ENCODE measurements at regions of chr15 and their contacts with region 1.

Region 1: DNA sequence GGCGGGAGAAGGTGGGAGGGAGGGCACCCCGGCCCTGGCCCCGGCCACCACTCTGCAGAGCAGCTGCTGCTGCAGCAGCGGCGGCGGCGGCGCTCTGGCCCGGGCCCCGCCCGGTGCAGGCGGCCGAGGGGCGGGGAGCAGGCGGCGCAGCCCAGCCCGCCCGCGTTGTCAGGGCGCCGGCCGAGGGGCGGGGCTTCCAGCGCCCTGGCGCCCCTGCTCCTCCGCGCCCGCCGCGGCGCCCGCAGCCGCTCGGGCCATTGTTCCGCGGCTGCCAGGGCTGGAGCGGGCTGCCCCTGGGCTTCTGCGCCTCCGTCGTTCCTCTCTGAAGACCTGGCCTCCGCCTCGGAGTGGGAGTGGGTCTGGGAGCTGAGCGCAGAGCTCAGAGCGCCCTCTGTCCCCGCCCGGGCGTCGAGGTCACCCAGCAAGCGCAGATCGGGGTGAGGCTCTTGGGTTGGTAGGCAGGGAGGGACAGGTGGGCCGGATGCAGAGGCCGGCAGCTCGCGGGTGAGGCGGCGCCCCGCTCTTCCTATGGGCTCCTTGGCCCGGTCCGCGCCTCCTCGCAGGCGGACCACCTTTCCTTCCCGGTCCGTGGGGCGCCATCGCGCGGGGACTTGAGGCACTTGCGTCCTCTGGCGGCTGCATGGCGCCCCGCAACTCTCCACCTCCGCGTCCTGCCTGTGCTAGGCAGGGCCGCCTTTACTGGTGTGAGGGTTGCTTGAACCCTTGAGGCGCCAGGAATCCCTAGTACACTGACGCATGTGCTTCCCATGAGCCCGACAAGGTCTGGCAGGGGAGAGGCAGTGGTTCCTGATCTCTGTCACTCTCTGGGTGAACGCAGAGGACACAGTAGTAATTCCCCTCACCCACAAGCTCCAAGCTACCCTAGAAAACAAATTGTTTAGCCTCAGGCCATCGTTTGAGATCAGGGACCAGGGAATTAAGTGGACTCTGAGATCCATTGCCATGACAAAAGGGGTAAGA is at the start of gene LPCAT4:
- DNase-seq: peak; percentile 79 to 96 (median 90)

Region 2: GRCh38 chr15:34223904-34224596 is 143.3 kb before region 1 on chr15:
- intact Hi-C with region 1: loop called (anchors 10 kb)
- DNase-seq: no peak

Region 3: GRCh38 chr15:34337557-34338306 is 29.7 kb before region 1 on chr15 and contains the start of gene SLC12A6:
- intact Hi-C with region 1: loop called (anchors 1 kb)
- DNase-seq: peak; percentile 73 to 96 (median 93)

Region 4: DNA sequence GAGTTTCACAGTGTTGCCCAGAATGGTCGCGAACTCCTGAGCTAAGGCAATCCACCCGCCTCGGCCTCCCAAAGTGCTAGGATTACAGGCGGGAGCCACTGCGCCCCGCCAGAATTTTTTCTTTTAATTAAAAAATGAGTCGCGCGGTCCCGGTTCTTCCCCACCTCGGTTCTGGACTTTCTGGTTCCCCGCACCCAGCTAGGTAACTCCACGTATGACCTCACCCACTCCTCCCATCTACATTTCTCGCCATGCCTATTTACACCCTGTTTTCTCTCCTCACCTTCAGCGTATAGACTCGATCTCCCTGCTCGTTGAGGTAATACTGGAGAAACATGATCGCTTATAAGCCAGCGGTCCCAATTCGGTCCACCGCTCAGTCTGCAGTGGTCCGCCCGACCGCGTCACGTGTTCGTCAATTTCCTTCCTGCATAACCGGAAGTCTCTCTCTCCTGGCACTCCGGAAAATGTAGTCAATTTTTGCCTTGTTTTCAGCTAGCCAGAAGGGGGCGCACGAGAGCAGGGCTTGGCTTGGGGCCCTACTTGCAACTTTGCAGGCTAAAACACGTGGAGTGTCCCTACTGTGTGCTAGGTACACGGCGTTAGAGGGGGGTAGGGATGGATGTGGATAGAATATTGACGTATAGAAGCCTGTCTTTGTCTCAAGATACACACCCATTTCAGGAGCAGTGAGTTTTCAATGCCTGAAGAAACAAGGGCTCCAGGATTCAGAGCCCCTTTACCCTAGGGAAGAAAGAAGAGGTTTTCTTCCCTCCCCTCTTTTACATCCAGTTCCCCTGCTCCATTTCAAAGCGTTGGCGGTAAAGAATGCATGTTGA is 24.4 kb before region 1 on chr15 and contains the starts of genes NOP10 and NUTM1:
- intact Hi-C with region 1: loop called (anchors 1 kb)
- DNase-seq: peak; percentile 86 to 98 (median 94)

Measured in head of caudate nucleus (tissue), 42 donors.